Common myeloid progenitor, CD34-positive (primary cell): ENCODE measurements at regions of chr3 and their contacts with region 1.

Region 1: GRCh38 chr3:64399205-64399800 is 174.0 kb upstream of the PRICKLE2 start:
- DNase-seq: peak; percentile 43 to 60 (median 53)
- H3K4me3 ChIP-seq: no peak overlapping the region
- H3K27ac ChIP-seq: no peak overlapping the region
- H3K4me1 ChIP-seq: no peaks in the 10 kb centered on the region
- H3K27me3 ChIP-seq: peaks cover 0 to 2% (median 0%) of the 10 kb centered on the region in 5 experiments

Region 2: DNA sequence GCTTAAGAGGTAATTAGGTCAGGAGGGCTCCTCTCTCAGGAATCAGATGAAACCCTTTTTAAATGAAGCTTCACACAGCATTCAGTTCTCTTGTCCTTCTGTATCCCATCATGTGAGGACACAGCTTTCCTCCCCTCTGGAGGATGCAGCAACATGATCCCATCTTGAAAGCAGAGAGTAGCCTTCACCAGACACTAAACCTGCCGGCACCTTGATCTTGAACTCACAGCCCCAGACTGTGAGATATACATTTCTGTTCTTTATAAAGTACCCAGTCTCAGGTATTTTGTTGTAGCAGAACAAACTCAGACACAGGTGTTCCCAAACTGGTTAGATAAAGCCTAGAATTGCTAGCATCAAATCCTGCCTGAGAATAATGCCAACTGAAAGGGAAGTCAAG is 90.4 kb before region 1 on chr3:
- CTCF ChIA-PET with region 1: no interaction called
- POLR2A ChIA-PET with region 1: no interaction called
- DNase-seq: no peak
- H3K4me3 ChIP-seq: no peak overlapping the region
- H3K27ac ChIP-seq: no peak overlapping the region
- H3K4me1 ChIP-seq: no peaks in the 10 kb centered on the region
- H3K27me3 ChIP-seq: no peaks in the 10 kb centered on the region

Region 3: GRCh38 chr3:64414043-64414442 is 14.7 kb after region 1 on chr3:
- CTCF ChIA-PET with region 1: interaction called, 11 read pairs
- POLR2A ChIA-PET with region 1: no interaction called
- DNase-seq: no peak
- H3K4me3 ChIP-seq: no peak overlapping the region
- H3K27ac ChIP-seq: no peak overlapping the region
- H3K4me1 ChIP-seq: no peaks in the 10 kb centered on the region
- H3K27me3 ChIP-seq: peaks cover 0 to 2% (median 0%) of the 10 kb centered on the region in 5 experiments